Activated CD4-positive, alpha-beta T cell treated with anti-CD3 and anti-CD28 coated beads for 36 hours (primary cell): ENCODE measurements at regions of chr12 and their contacts with region 1.

Region 1: GRCh38 chr12:132908145-132909044 is 21.0 kb upstream of the CHFR start:
- DNase-seq: peak; percentile 99
- ATAC-seq: peak; percentile 94
- H3K4me3 Mint-ChIP-seq: peak overlapping the region; percentile 84
- H3K27ac Mint-ChIP-seq: peak overlapping the region; percentile 88
- H3K4me1 Mint-ChIP-seq: peaks cover 17% of the 10 kb centered on the region
- H3K27me3 Mint-ChIP-seq: peaks cover 2% of the 10 kb centered on the region

Region 2: GRCh38 chr12:132687208-132688164 is 220.9 kb before region 1 on chr12 and contains the starts of genes POLE and PXMP2:
- CTCF ChIA-PET with region 1: no interaction called
- POLR2A ChIA-PET with region 1: no interaction called
- intact Hi-C with region 1: loop called in 1 of 2 experiments (anchors 1 kb)
- DNase-seq: peak; percentile 98
- ATAC-seq: peak; percentile 94
- H3K4me3 Mint-ChIP-seq: peak within 1 kb of the TSS; percentile 72
- H3K27ac Mint-ChIP-seq: peak within 1 kb of the TSS; percentile 55
- H3K4me1 Mint-ChIP-seq: peaks cover 19% of the 10 kb centered on the region
- H3K27me3 Mint-ChIP-seq: no peaks in the 10 kb centered on the region
- total RNA-seq, gene POLE: 121 to 124 TPM
- total RNA-seq, gene PXMP2: 12.2 to 14.3 TPM

Region 3: DNA sequence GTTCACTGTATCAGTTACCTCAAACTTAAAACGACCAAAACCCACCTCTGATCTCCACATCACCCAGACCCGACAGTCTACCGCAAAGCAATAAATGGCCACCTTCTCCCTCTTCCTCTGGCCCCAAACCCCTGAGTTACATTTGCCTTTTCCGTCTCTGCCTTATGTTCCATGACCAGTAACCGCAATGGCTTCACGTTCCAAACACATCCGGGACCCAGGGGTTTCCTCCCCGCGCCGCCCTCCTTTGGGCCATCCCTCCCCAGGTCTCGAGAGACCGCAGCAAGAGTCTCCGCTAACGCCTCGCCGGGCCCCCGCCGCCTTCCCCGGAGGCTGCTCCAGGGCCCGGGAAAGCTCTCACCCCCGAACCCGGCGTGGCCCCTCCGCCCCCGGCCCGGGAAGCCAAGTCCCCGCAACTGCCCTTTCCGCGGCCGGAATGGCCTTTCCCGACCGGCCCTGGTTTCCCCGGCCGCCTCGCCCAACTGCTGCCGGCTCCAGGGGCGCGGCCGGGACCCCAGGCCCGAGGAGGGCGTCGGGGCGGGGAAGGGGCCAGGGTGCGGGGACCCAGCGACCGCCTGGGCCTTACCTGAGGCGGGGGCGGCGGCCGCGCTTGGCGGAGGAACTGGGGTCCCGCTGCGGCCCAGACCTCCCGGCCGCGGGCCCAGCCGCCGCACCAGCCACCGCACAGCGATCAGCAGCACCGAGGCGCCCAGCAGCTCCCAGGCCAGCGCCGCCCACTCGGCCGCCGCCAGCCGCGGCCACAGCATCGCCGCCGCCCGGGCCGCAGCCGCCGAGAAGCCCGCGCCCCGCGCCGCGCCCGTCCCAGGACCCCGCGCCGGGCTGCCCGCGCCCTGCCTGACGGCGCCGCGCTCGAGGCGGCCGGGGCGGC is 147.1 kb before region 1 on chr12 and contains the start of gene ANKLE2:
- CTCF ChIA-PET with region 1: interaction called, 11 read pairs
- POLR2A ChIA-PET with region 1: no interaction called
- intact Hi-C with region 1: loop called (anchors 1 to 5 kb)
- DNase-seq: peak; percentile 84
- ATAC-seq: peak; percentile 41
- H3K4me3 Mint-ChIP-seq: peak within 1 kb of the TSS; percentile 90
- H3K27ac Mint-ChIP-seq: peak within 1 kb of the TSS; percentile 98
- H3K4me1 Mint-ChIP-seq: peaks cover 33% of the 10 kb centered on the region
- H3K27me3 Mint-ChIP-seq: no peaks in the 10 kb centered on the region
- total RNA-seq, gene ANKLE2: 110 to 111 TPM

Region 4: DNA sequence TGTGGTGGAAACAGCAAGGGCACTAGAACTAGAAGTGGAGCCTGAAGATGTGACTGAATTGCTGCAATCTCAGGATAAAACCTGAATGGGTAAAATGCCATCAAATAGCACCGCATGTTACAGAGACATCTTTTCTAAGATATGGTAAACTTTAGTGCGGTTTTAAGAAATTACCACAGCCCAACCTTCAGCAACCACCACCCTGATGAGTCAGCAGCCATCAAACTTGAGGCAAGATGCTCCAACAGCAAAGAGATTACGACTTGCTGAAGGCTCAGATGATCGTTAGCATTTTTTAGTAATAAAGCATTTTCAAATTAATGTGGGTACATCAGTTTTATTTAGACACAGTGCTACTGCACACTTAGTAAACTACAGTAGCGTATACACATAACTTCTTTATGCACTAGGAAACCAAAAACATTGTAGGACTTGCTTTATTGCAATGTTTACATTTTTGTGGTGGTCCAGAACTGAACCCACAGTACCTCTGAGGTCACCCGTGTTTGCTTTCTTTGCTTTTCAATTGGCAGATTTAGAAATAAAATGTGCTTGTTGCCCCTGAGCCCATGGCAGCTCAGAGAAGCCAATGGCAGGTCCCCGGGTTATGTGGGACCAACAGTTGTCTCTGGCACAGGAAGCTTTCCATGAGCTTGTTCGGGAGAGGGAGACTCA is 95.6 kb before region 1 on chr12:
- CTCF ChIA-PET with region 1: interaction called, 3 read pairs
- POLR2A ChIA-PET with region 1: no interaction called
- intact Hi-C with region 1: loop called in 1 of 2 experiments (anchors 2 kb)
- DNase-seq: peak; percentile 37
- ATAC-seq: peak; percentile 26
- H3K4me3 Mint-ChIP-seq: no peak overlapping the region
- H3K27ac Mint-ChIP-seq: no peak overlapping the region
- H3K4me1 Mint-ChIP-seq: peaks cover 19% of the 10 kb centered on the region
- H3K27me3 Mint-ChIP-seq: no peaks in the 10 kb centered on the region

Region 5: DNA sequence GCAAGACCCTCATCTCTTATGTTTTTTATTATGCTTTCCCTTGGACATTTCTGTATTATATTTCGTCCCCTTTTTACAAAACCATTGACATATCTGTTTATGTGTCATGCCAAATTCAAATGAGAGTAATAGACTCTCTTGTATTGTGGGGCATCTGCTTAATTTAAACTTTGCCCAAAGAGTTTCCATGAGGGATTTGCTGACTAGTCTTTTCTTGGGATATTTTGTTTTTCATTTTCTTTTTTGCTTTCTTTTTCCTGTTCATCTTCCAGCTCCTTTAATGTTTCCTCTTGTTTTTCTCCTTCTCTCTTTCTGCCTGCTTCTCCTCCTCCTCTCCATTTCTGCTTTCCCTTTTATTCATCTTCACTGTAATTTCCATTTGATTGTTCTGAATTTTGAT is 64.0 kb after region 1 on chr12:
- CTCF ChIA-PET with region 1: no interaction called
- POLR2A ChIA-PET with region 1: no interaction called
- intact Hi-C with region 1: no loop called
- DNase-seq: no peak
- ATAC-seq: no peak
- H3K4me3 Mint-ChIP-seq: no peak overlapping the region
- H3K27ac Mint-ChIP-seq: no peak overlapping the region
- H3K4me1 Mint-ChIP-seq: no peaks in the 10 kb centered on the region
- H3K27me3 Mint-ChIP-seq: peaks cover 1% of the 10 kb centered on the region

Region 6: GRCh38 chr12:132986001-132986912 is 77.9 kb after region 1 on chr12 and contains the start of gene ZNF26:
- CTCF ChIA-PET with region 1: no interaction called
- POLR2A ChIA-PET with region 1: no interaction called
- intact Hi-C with region 1: loop called (anchors 1 kb)
- DNase-seq: peak; percentile 94
- ATAC-seq: peak; percentile 97
- H3K4me3 Mint-ChIP-seq: peak within 1 kb of the TSS; percentile 79
- H3K27ac Mint-ChIP-seq: peak within 1 kb of the TSS; percentile 96
- H3K4me1 Mint-ChIP-seq: peaks cover 26% of the 10 kb centered on the region
- H3K27me3 Mint-ChIP-seq: peaks cover 4% of the 10 kb centered on the region
- total RNA-seq, gene ZNF26: 12.3 to 17.0 TPM

Region 7: GRCh38 chr12:133080368-133081158 is 172.2 kb after region 1 on chr12 and contains the start of gene ZNF140:
- CTCF ChIA-PET with region 1: interaction called, 3 read pairs
- POLR2A ChIA-PET with region 1: interaction called, 7 read pairs
- intact Hi-C with region 1: loop called (anchors 1 kb)
- DNase-seq: peak; percentile 97
- ATAC-seq: peak; percentile 64
- H3K4me3 Mint-ChIP-seq: no peak within 1 kb of the TSS
- H3K27ac Mint-ChIP-seq: no peak within 1 kb of the TSS
- H3K4me1 Mint-ChIP-seq: peaks cover 13% of the 10 kb centered on the region
- H3K27me3 Mint-ChIP-seq: no peaks in the 10 kb centered on the region
- total RNA-seq, gene ZNF140: 13.3 to 14.3 TPM